ENCODE measurements at regions of chr6 and their contacts with region 1.

Region 1: DNA sequence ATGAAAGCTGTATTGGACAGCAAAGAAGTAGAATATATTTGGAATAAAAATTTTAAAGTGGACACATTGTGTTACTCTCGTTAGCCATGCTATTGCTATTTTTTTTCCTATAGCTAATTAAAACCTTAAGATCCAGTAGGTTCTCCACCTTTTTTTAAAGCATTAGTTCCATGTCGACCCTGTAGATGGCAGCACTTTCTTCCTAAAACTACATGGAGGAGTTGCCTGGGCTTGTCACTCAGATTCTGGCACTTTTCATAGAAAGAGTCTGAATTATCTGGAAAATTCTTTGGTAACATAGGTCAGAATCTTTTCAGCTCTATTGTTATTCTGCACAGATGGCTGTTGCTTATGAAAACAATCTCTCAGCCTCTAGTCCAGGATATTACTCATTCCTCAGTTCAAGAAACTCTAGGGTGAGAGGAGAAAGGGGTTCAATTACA is 42.0 kb upstream of the ESR1 start:
- DNase-seq: peak; percentile 83
- H3K4me3 ChIP-seq: peak overlapping the region in 1 of 3 experiments; percentile 17
- H3K27ac ChIP-seq: no peak overlapping the region
- H3K4me1 ChIP-seq: peaks cover 18% of the 10 kb centered on the region
- H3K27me3 ChIP-seq: no peaks in the 10 kb centered on the region
- CTCF ChIP-seq: peak; percentile 70 to 74

Region 2: DNA sequence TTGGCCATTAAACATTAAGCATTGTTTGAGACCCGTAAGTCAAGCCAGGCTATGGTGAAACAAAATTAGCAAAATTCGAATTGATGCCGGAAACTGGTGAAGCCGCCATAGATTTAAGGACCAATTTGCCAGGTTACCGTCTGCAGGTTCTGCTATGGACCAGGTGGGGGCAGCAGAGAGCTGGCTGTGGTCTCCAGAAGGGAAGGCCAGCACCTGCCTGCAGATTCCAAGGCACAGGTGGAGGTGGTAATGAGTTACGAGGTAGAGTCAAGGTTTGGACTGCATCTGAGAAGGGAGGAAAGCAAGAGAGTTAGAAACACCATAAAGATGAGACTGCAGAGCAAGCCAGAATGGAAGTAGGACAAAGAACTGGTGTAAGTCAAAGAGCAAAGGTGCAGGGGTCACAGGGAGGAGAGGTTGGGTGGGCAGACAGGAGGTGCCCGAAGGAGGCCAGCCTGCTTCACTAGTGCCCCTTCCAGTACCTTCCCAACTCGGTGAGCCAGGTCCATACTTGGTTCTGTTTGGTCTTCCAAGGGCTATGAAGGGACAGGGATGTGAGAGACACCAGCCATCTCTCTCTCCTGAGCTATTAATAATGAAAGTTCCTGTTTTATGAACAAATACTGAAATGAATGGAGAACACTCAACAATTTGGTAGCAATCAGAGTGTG is 89.6 kb before region 1 on chr6:
- CTCF ChIA-PET with region 1: no interaction called
- dilution Hi-C with region 1: no loop called
- in situ Hi-C with region 1: no loop called
- intact Hi-C with region 1: loop called (anchors 1 kb)
- DNase-seq: peak; percentile 38
- H3K4me3 ChIP-seq: no peak overlapping the region
- H3K27ac ChIP-seq: no peak overlapping the region
- H3K4me1 ChIP-seq: no peaks in the 10 kb centered on the region
- H3K27me3 ChIP-seq: no peaks in the 10 kb centered on the region
- CTCF ChIP-seq: peak; percentile 95 to 98

Region 3: DNA sequence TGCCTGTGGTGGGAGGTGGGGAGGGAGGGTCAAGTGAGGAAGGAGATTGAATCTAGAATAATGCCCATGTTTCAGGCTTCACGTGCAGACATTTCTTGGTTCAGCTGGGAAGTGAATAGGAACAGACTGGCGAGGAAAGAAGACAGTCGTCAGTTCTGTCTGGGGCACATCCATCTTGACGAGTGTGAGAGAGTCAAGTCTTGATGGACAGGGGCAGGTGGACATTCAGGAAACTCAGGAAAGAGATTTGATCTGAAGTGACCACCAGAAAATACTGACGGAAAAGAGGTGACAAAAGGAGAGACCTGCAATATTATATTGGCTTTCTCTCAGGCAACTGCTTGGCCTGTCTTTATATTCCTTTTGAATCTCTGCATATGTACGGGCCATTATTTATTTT is 110.7 kb after region 1 on chr6:
- CTCF ChIA-PET with region 1: no interaction called
- dilution Hi-C with region 1: no loop called
- in situ Hi-C with region 1: no loop called
- intact Hi-C with region 1: no loop called
- DNase-seq: no peak
- H3K4me3 ChIP-seq: no peak overlapping the region
- H3K27ac ChIP-seq: no peak overlapping the region
- H3K4me1 ChIP-seq: peaks cover 10% of the 10 kb centered on the region
- H3K27me3 ChIP-seq: no peaks in the 10 kb centered on the region
- CTCF ChIP-seq: no peak

Region 4: DNA sequence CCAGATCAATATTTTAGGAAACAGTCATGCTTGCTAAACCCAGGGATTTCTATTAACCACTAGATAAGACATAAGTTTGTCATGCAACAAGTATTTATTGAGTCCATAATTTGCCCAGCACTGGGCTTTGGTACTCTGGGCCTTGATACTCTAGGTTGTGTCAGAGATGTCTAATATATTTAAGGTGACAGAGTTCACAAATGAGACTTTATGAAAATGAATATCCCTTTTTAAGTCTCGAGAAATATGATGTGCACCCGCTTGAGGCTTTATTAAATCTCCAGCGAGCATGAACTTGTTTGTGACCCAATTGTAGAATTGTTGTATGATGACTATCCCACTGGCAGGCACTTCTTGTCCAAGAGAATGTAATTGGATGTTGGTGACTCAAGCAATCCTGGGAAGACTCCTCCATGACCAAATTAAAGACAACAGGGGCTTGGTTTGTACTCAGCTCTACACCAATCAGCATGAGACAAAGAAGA is 151.3 kb after region 1 on chr6:
- CTCF ChIA-PET with region 1: interaction called, 9 read pairs
- dilution Hi-C with region 1: no loop called
- in situ Hi-C with region 1: no loop called
- intact Hi-C with region 1: loop called (anchors 2 kb)
- DNase-seq: peak; percentile 99
- H3K4me3 ChIP-seq: no peak overlapping the region
- H3K27ac ChIP-seq: peak overlapping the region; percentile 93
- H3K4me1 ChIP-seq: peaks cover 39% of the 10 kb centered on the region
- H3K27me3 ChIP-seq: no peaks in the 10 kb centered on the region
- CTCF ChIP-seq: no peak

Region 5: DNA sequence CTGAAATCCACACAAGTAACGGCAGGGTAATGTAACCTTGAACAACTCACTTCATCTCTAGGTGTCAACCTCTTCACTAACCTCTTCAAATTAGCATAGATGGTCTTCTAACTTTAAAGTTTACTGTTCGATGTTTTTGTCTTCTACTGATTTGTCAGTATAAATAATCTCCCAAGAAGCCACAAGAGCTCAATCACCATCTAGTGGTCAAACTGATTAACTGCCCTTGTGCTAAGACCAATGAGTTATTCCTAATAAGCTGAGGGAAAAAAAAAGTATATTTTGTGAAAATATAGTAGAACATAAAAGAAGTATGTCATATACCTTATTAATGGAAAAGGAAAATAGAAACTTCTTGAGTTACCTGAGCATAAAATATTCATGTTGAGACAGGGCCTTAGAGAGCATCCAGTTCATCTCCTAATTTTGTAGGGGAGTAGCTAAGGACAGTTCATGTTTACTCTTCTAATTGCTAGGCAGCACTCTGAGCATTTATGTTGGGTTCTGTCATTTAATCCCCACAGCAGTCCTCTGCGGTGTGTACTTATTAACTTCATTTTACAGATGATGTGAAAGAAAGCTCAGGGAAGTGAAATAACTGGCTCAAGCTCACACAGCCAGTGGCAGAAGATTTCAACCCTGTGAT is 359.1 kb after region 1 on chr6:
- CTCF ChIA-PET with region 1: interaction called, 10 read pairs
- dilution Hi-C with region 1: no loop called
- in situ Hi-C with region 1: loop called (anchors 10 kb)
- intact Hi-C with region 1: loop called (anchors 1 kb)
- DNase-seq: peak; percentile 49
- H3K4me3 ChIP-seq: no peak overlapping the region
- H3K27ac ChIP-seq: no peak overlapping the region
- H3K4me1 ChIP-seq: peaks cover 23% of the 10 kb centered on the region
- H3K27me3 ChIP-seq: no peaks in the 10 kb centered on the region
- CTCF ChIP-seq: peak; percentile 85 to 88

Measured in mammary epithelial cell (primary cell).